OCI-LY7 (cell line): ENCODE measurements at regions of chr2 and their contacts with region 1.

Region 1: GRCh38 chr2:231674587-231675338 is 33.6 kb upstream of the PTMA start:
- DNase-seq: peak; percentile 99
- H3K4me3 ChIP-seq: peak overlapping the region; percentile 78
- H3K27ac ChIP-seq: peak overlapping the region; percentile 99
- H3K4me1 ChIP-seq: peaks cover 84% of the 10 kb centered on the region
- CTCF ChIP-seq: peak; percentile 94

Region 2: GRCh38 chr2:231297108-231297908 is 377.5 kb before region 1 on chr2:
- CTCF ChIA-PET with region 1: no interaction called
- POLR2A ChIA-PET with region 1: no interaction called
- intact Hi-C with region 1: no loop called
- DNase-seq: peak; percentile 82
- H3K4me3 ChIP-seq: peak overlapping the region; percentile 35
- H3K27ac ChIP-seq: no peak overlapping the region
- H3K4me1 ChIP-seq: peaks cover 36% of the 10 kb centered on the region
- CTCF ChIP-seq: peak; percentile 89

Region 3: DNA sequence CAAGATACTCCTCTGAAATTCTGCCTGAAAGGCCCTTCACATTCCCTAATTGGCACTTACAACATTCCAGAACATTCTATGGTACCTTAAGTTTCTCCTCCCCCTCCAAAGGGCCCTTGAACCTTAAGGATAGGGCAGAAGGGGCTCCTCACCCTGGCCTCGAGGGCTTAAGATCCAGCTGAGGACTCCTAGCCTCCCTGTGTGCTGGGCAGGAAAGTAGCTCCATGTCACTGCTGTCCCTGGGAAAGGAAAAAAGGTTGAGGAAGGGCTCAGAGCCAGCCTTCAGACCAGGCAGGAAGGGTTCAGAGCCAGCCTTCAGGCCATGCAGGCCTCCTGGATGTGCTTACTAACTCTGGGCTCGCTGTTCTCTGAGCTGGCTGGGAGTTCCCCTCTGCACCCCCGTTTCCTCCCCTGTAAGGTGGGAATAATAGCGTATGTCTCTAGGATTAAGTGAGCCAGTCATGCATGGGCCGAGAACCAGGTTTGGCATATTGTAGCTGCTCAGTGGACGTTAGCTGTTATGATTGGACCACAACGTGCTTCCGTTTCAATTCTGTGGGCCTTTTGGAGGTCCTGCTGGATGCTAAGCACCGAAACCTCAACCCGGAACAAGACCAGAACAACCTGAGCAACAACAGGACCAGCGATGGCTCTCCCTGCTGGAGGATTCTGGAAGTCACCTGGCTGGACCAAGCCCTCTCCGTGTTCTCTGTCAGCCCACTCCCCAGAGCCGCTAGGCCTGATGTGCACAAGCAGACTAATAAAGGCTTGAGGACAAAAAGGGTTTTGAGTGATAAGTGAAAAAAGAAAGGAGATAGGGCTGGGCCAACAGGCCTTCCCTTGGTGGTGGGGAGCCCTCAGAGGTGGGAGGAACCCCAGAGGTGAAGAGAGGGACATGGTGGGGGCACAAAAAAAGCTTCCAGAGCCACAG is 280.3 kb before region 1 on chr2:
- CTCF ChIA-PET with region 1: no interaction called
- POLR2A ChIA-PET with region 1: no interaction called
- intact Hi-C with region 1: loop called (anchors 10 kb)
- DNase-seq: peak; percentile 91
- H3K4me3 ChIP-seq: peak overlapping the region; percentile 79
- H3K27ac ChIP-seq: peak overlapping the region; percentile 97
- H3K4me1 ChIP-seq: peaks cover 50% of the 10 kb centered on the region
- CTCF ChIP-seq: peak; percentile 79

Region 4: GRCh38 chr2:231454361-231454791 is 220.4 kb before region 1 on chr2:
- CTCF ChIA-PET with region 1: no interaction called
- POLR2A ChIA-PET with region 1: no interaction called
- intact Hi-C with region 1: no loop called
- DNase-seq: no peak
- H3K4me3 ChIP-seq: no peak overlapping the region
- H3K27ac ChIP-seq: no peak overlapping the region
- H3K4me1 ChIP-seq: no peaks in the 10 kb centered on the region
- CTCF ChIP-seq: no peak

Region 5: GRCh38 chr2:231563378-231563961 is 111.3 kb before region 1 on chr2:
- CTCF ChIA-PET with region 1: no interaction called
- POLR2A ChIA-PET with region 1: interaction called, 4 read pairs
- intact Hi-C with region 1: loop called (anchors 2 kb)
- DNase-seq: peak; percentile 68
- H3K4me3 ChIP-seq: no peak overlapping the region
- H3K27ac ChIP-seq: no peak overlapping the region
- H3K4me1 ChIP-seq: peaks cover 6% of the 10 kb centered on the region
- CTCF ChIP-seq: peak; percentile 76

Region 6: DNA sequence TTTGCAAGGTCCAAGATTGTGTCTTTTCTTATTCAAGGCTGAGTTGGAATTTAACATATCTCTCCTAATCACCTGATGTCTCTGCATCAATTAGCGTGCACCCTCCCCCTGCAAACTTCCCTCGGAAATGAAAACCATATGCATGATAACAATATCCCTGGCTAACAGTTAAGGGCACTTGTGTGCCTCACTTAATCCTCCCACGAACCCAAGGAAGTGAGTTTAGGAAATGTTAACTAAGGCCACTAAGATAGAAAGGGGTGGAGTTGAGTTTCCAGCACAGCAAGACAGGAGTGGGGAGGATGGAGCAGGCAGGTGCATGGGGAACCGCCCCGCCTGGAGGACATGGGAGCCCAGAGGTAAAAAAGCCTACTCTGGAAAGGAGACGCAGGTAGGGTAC is 18.9 kb before region 1 on chr2:
- CTCF ChIA-PET with region 1: interaction called, 4 read pairs
- POLR2A ChIA-PET with region 1: interaction called, 13 read pairs
- intact Hi-C with region 1: no loop called
- DNase-seq: no peak
- H3K4me3 ChIP-seq: no peak overlapping the region
- H3K27ac ChIP-seq: no peak overlapping the region
- H3K4me1 ChIP-seq: peaks cover 2% of the 10 kb centered on the region
- CTCF ChIP-seq: no peak

Region 7: GRCh38 chr2:231696007-231696371 is 21.2 kb after region 1 on chr2:
- CTCF ChIA-PET with region 1: interaction called, 3 read pairs
- POLR2A ChIA-PET with region 1: interaction called, 10 read pairs
- intact Hi-C with region 1: no loop called
- DNase-seq: no peak
- H3K4me3 ChIP-seq: no peak overlapping the region
- H3K27ac ChIP-seq: no peak overlapping the region
- H3K4me1 ChIP-seq: peaks cover 6% of the 10 kb centered on the region
- CTCF ChIP-seq: no peak

Region 8: DNA sequence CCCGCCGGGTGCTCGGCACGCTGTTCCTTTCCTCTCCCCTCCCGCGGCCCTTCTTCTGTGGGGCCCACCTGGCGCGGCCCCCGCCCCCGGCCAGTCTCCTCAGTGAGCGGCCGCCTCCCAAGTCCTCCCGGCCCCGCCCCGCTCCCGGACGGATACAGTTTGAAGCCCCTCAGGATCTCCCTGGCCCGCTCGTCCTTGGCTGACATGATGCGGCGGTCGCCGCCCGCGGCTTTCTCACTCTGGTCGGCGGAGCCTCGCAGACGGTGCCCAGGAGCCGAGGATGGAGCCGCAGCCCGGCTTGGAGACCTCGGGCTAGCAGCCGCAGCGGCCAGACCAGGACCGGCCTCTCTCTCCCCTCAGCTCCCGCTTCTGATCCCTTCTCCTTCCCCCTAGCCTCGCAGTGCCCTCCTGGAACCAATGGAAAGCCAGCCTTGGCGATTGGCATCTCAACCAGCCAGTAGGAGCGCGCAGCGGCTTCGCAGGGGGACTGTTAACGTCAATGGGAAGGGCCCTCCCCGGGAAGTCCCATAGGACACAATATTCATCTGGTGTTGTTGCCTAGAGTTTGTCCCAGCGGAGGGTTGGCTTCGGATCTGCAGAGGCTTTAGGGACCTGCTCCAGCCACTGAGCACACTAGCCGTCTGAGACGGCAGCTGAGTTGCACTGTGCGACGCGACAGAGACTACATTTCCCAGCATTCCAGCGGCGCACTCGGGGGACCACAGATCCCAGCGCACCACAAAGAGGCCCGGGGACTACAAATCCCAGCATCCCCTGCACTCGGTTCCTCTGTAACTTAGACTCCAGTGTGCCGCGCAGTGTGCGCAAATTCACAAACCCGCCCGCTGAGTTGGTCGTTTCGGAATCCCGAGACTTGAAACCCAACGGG is 106.4 kb after region 1 on chr2 and contains the start of gene PDE6D:
- CTCF ChIA-PET with region 1: interaction called, 3 read pairs
- POLR2A ChIA-PET with region 1: interaction called, 4 read pairs
- intact Hi-C with region 1: loop called (anchors 1 kb)
- DNase-seq: peak; percentile 97
- H3K4me3 ChIP-seq: peak within 1 kb of the TSS; percentile 75
- H3K27ac ChIP-seq: peak within 1 kb of the TSS; percentile 39
- H3K4me1 ChIP-seq: peaks cover 40% of the 10 kb centered on the region
- CTCF ChIP-seq: no peak
- total RNA-seq, gene PDE6D: 47.4 and 50.3 TPM in 2 replicates